ENCODE measurements at regions of chr15 and their contacts with region 1.

Region 1: GRCh38 chr15:83066734-83067637 is at the start of gene BTBD1:
- DNase-seq: peak; percentile 74 to 99 (median 85)

Region 2: GRCh38 chr15:82789491-82789890 is 277.5 kb before region 1 on chr15:
- intact Hi-C with region 1: no loop called
- DNase-seq: no peak

Region 3: GRCh38 chr15:83108266-83109226 is 41.6 kb after region 1 on chr15:
- intact Hi-C with region 1: no loop called
- DNase-seq: peak in 9 of 10 donors; percentile 10 to 87 (median 29)

Region 4: DNA sequence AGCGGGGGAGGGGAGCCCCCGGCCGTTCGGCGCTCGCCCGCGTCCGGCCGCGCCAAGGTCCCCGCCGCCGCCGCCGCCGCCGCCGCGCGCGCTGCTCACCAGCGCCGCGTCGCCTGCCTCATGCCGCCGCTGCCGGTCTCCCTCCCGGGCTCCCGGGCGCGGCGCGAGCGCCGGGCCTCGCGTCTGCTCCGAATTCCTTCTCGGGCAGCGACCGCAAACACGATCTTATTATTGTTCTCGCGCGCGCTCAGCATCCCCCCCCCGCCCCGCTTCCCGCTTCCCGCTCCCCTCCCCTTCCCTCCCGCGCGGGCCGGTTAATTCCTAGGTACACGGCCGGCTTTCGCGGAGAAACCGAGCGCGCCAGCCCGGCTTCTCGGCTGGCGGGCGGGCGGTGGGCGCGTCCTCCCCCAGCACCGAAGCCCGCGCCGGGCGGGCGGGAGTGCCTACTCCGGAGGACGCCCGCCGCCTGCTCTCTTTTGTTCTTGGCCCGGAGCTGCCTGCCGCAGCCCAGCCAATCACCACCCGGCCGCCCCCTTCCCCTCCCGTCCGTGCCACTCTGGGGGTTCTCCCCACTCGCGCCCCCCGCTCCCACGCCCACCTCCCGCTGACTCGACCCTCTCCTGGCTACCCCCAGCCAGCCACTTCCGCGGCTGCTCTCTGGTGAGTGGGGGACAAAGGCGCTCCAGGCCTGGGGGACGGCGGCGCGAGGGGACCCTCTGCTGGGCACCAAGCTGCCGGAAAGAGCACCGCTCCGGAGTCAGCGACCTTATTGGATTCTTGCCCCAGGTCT is 140.8 kb after region 1 on chr15 and contains the start of gene HDGFL3:
- intact Hi-C with region 1: loop called (anchors 5 kb)
- DNase-seq: peak; percentile 39 to 94 (median 65)

Measured in posterior cingulate gyrus (tissue), 11 donors.